ENCODE measurements at regions of chr2 and their contacts with region 1.

Region 1: DNA sequence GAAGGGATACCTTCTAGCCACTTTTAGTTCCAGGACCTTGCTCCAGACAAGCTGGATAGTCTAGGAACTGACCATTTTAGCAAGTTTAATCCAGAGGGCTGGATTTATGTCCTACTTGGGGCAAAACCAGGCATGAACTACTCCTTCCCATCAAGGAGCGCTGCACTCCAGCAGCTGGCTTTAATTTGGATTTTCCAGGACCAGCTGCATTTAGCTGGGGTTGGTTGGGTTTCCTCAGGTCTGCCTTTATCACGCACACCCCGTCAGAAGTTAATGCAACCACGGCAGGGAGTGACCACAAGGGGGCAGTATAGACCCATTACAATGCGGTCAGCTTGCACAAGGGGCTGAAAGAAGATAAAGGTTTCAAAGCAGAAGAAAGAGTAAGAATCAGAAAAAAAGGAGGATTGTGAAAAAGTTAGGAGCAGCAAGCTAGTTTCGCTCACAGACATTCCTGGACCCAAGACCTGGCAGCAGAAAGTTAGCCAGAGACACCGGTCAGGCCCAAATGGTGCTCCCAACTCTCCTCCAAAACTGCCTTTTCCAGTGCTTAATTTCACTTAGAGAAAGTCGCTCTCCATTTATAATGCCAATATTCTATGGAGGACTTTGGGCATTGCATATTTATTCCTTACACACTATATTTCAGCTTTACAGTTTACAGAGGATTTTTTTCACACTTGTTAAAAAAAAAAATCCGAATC is 40.1 kb downstream of the SLC4A1AP start:
- DNase-seq: peak; percentile 73 to 80
- H3K4me3 ChIP-seq: no peak overlapping the region
- H3K27ac ChIP-seq: peak overlapping the region; percentile 98
- H3K4me1 ChIP-seq: peaks cover 53% of the 10 kb centered on the region
- H3K27me3 ChIP-seq: no peaks in the 10 kb centered on the region
- CTCF ChIP-seq: peak; percentile 95

Region 2: DNA sequence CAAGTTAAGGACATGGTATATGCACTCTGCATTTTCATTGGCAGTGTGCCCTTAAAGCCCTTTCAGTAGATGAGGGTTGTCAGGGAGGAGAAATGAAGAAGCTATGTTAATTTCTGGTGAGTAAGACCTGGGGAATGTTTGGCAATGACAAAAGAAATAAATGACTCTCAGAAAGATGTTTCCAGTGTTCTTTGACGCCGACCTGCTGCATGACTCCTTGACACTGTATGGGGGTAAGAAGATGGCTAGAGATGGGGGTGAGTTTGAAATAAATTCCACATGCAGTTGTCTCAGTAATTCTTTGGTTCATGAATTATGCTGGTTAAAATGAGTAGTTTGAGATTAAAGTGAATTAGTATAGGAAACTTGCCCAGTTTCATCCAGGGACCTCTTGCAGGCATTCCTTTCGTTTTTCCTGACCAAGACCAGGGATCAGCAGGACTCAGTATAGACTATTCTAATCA is 80.8 kb before region 1 on chr2:
- CTCF ChIA-PET with region 1: no interaction called
- POLR2A ChIA-PET with region 1: no interaction called
- intact Hi-C with region 1: no loop called
- DNase-seq: no peak
- H3K4me3 ChIP-seq: no peak overlapping the region
- H3K27ac ChIP-seq: no peak overlapping the region
- H3K4me1 ChIP-seq: peaks cover 21% of the 10 kb centered on the region
- H3K27me3 ChIP-seq: no peaks in the 10 kb centered on the region
- CTCF ChIP-seq: no peak

Region 3: GRCh38 chr2:27683390-27684071 is 20.3 kb before region 1 on chr2:
- CTCF ChIA-PET with region 1: interaction called, 10 read pairs
- POLR2A ChIA-PET with region 1: no interaction called
- intact Hi-C with region 1: no loop called
- DNase-seq: peak; percentile 78 to 82
- H3K4me3 ChIP-seq: no peak overlapping the region
- H3K27ac ChIP-seq: peak overlapping the region; percentile 98
- H3K4me1 ChIP-seq: peaks cover 44% of the 10 kb centered on the region
- H3K27me3 ChIP-seq: no peaks in the 10 kb centered on the region
- CTCF ChIP-seq: peak; percentile 100

Region 4: DNA sequence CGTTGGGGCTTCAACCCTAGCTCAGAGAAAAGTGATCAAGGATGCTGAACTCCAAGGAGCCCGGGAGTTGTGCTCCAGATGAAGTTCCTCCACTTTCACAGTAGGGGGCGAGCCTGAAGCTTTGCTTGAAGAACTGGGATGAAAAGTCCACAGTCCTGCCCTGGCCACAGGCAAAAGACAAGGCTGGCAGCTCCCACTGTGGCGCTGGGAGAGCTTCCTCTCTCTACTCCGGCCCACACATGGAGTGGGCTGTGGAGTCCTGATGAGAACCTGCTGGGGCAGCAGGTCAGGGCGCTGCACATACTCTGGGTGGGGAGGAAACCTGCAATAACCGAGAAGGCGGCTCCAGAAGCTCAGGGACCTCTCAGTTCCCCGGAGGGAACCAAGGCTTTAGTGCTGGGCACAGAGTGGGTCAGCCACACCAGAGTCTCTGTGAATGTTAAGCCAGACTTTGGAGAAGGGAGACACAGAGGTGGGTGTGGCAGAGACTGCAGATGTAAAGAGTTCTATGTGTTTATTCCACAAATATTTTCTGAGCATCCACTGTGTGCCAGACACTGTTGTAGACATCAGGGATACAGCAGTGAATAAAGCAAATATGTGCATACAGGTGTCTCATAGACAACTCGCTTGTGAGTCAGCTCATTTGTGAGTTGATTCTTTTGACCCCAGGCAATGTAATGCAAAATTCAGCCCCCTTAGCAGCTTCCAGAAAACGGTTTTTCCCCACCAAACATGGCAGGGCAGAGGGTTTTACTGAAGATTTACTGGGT is 19.8 kb after region 1 on chr2:
- CTCF ChIA-PET with region 1: interaction called, 3 read pairs
- POLR2A ChIA-PET with region 1: no interaction called
- intact Hi-C with region 1: loop called (anchors 1 kb)
- DNase-seq: peak; percentile 52 to 55
- H3K4me3 ChIP-seq: no peak overlapping the region
- H3K27ac ChIP-seq: peak overlapping the region; percentile 92
- H3K4me1 ChIP-seq: peaks cover 64% of the 10 kb centered on the region
- H3K27me3 ChIP-seq: no peaks in the 10 kb centered on the region
- CTCF ChIP-seq: peak; percentile 91

Region 5: GRCh38 chr2:27890146-27890923 is 186.5 kb after region 1 on chr2 and contains the starts of genes BABAM2 and RBKS:
- CTCF ChIA-PET with region 1: no interaction called
- POLR2A ChIA-PET with region 1: no interaction called
- intact Hi-C with region 1: loop called (anchors 1 kb)
- DNase-seq: peak; percentile 75 to 91
- H3K4me3 ChIP-seq: peak within 1 kb of the TSS; percentile 81
- H3K27ac ChIP-seq: peak within 1 kb of the TSS; percentile 96
- H3K4me1 ChIP-seq: peaks cover 41% of the 10 kb centered on the region
- H3K27me3 ChIP-seq: no peaks in the 10 kb centered on the region
- CTCF ChIP-seq: no peak
- total RNA-seq, gene BABAM2: 45.9 and 46.1 TPM in 2 replicates
- total RNA-seq, gene RBKS: 4.5 and 6.8 TPM in 2 replicates

Region 6: DNA sequence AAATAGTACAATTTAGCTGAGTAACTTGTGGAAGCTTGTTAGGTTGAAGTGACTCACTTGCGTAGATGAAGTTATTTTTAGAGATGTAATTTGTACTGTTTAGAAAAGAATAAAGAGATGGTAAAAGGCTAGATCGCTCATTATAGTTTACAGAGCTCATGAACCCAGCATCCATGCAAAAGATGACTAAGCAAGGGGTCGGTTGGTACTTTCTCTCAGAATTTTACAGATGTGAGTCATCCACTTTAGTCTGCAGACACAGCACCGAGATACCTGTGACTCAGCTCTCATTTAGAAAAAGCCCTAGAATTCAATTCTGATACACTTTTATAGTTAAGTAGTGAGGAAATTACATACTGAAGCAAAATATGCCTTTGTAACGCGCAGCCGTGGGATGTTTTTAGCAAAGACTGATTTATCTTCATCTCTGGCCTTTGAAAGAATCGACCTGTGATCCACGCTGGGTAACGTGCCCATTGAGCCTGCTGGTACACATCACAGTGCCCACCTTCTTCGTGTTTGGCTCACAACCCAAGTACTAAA is 572.4 kb after region 1 on chr2:
- CTCF ChIA-PET with region 1: no interaction called
- POLR2A ChIA-PET with region 1: no interaction called
- intact Hi-C with region 1: loop called (anchors 5 kb)
- DNase-seq: peak; percentile 38 to 96
- H3K4me3 ChIP-seq: peak overlapping the region; percentile 30; the same call in 1 of the 2 replicates
- H3K27ac ChIP-seq: peak overlapping the region; percentile 90
- H3K4me1 ChIP-seq: peaks cover 91% of the 10 kb centered on the region
- H3K27me3 ChIP-seq: no peaks in the 10 kb centered on the region
- CTCF ChIP-seq: no peak

Region 7: DNA sequence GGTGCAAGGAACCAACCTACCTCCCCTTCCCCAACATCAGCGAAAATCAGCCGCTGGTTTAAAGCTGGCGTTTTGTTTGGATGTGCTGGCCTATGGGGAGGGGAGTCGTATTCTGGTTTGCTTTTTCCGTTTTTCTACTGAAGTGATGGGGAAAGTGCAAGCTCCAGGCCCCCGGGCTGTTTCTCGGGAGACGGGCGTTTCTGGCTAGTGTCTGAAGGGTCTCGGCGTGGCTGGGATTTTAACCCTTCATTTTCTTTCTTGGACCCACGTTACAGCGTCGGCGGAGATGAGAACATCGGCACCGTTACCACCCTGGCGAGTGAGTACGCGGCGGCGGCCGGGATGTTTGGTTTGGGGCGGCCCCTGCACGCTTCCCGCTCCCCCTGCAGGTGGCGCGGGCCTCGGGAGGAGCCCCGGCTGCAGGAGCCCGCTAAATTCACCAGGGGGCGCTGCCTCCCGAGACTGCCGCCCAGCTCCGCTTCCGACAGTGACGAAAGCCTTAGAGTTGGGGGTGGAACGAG is 862.8 kb after region 1 on chr2:
- CTCF ChIA-PET with region 1: no interaction called
- POLR2A ChIA-PET with region 1: no interaction called
- intact Hi-C with region 1: loop called (anchors 1 kb)
- DNase-seq: peak; percentile 64 to 89
- H3K4me3 ChIP-seq: peak overlapping the region; percentile 79
- H3K27ac ChIP-seq: no peak overlapping the region
- H3K4me1 ChIP-seq: peaks cover 6% of the 10 kb centered on the region
- H3K27me3 ChIP-seq: no peaks in the 10 kb centered on the region
- CTCF ChIP-seq: peak; percentile 100

Region 8: GRCh38 chr2:28716265-28716867 is 1012.6 kb after region 1 on chr2:
- CTCF ChIA-PET with region 1: no interaction called
- POLR2A ChIA-PET with region 1: no interaction called
- intact Hi-C with region 1: no loop called
- DNase-seq: peak; percentile 60 to 96
- H3K4me3 ChIP-seq: peak overlapping the region; percentile 39; the same call in 1 of the 2 replicates
- H3K27ac ChIP-seq: peak overlapping the region; percentile 90
- H3K4me1 ChIP-seq: peaks cover 69% of the 10 kb centered on the region
- H3K27me3 ChIP-seq: no peaks in the 10 kb centered on the region
- CTCF ChIP-seq: no peak